ENCODE measurements at regions of chr7 and their contacts with region 1.

Region 1: GRCh38 chr7:28020302-28020940 is 160.2 kb downstream of the JAZF1 start:
- DNase-seq: peak; percentile 66 to 69
- H3K4me3 ChIP-seq: no peak overlapping the region
- H3K27ac ChIP-seq: no peak overlapping the region
- H3K4me1 ChIP-seq: peaks cover 8% of the 10 kb centered on the region; the same call in 1 of the 2 replicates
- H3K27me3 ChIP-seq: no peaks in the 10 kb centered on the region
- CTCF ChIP-seq: peak; percentile 96

Region 2: GRCh38 chr7:26853788-26854393 is 1166.5 kb before region 1 on chr7:
- CTCF ChIA-PET with region 1: no interaction called
- POLR2A ChIA-PET with region 1: no interaction called
- intact Hi-C with region 1: loop called (anchors 10 kb)
- DNase-seq: peak in 1 of 2 experiments; percentile 60
- H3K4me3 ChIP-seq: no peak overlapping the region
- H3K27ac ChIP-seq: no peak overlapping the region
- H3K4me1 ChIP-seq: peaks cover 24% of the 10 kb centered on the region
- H3K27me3 ChIP-seq: no peaks in the 10 kb centered on the region
- CTCF ChIP-seq: peak; percentile 90

Region 3: DNA sequence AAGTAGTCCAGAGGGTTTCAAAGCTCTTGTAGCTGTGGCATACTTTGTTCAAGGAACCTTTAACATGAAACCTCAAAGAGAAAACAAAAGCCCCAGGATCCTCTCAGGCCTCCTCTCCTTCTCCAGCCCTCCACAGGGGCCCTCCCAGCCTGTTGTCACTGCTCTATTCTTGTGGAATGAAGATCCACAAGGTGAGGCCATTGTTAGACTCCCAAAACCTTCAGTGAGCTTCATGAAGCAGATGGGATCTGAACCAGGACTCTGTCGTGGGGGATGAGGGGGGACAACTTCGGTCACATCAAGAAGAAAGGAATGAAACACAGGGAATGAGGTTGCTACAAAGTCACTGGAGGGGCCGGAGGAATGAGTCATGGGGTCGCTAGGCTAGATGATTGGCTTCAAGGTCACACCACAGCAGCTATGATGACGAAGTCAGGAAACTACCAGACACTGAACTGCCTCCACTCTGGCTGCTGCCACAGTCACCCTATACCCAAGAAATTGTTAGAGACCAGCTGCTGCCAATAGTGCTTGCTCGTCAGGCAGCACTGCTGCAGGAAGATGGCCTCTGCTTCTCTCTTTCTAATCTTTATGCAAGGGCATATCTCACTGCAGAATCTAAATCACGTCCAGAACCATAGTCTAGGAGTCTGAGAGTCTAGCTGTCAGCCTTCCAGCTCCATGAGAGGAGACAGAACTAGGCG is 566.6 kb before region 1 on chr7:
- CTCF ChIA-PET with region 1: interaction called, 11 read pairs
- POLR2A ChIA-PET with region 1: no interaction called
- intact Hi-C with region 1: no loop called
- DNase-seq: no peak
- H3K4me3 ChIP-seq: no peak overlapping the region
- H3K27ac ChIP-seq: no peak overlapping the region
- H3K4me1 ChIP-seq: no peaks in the 10 kb centered on the region
- H3K27me3 ChIP-seq: no peaks in the 10 kb centered on the region
- CTCF ChIP-seq: no peak

Region 4: DNA sequence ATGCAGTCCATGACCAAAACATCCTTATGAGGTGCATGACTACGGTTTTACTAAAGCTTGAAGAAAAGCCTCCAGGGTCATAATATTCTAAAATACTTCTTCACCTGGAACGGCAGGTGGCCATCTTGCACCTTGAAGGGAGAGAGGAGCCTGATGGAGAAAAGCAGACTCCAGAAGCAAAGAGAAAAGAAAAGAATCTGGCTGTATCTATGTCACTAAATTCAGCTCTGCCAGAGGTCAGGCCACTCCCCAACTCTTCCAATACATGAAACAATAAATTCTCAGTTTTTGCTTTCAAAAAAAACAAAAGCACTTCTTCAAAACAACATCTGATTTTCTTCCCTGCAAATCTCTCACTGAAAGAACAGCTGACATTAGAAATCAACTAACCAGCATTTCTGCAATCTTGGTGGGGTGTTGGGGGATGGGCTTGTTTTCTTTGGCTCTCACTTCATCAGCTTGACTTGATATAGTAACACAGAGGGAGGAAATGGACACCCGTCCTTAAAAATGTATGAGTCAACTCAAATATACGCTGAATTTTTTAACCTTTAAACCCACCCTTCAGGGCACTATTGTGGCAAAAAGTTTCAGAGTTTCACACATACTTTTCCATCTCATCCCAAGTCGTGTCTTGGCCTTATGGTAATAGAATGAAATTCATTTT is 379.4 kb before region 1 on chr7:
- CTCF ChIA-PET with region 1: no interaction called
- POLR2A ChIA-PET with region 1: no interaction called
- intact Hi-C with region 1: loop called (anchors 5 kb)
- DNase-seq: peak; percentile 87 to 96
- H3K4me3 ChIP-seq: peak overlapping the region; percentile 8; the same call in 1 of the 2 replicates
- H3K27ac ChIP-seq: peak overlapping the region; percentile 90
- H3K4me1 ChIP-seq: peaks cover 37% of the 10 kb centered on the region
- H3K27me3 ChIP-seq: no peaks in the 10 kb centered on the region
- CTCF ChIP-seq: peak; percentile 40; the same call in 1 of the 2 replicates

Region 5: GRCh38 chr7:27763983-27764516 is 256.4 kb before region 1 on chr7:
- CTCF ChIA-PET with region 1: no interaction called
- POLR2A ChIA-PET with region 1: no interaction called
- intact Hi-C with region 1: loop called (anchors 5 kb)
- DNase-seq: no peak
- H3K4me3 ChIP-seq: no peak overlapping the region
- H3K27ac ChIP-seq: no peak overlapping the region
- H3K4me1 ChIP-seq: peaks cover 17% of the 10 kb centered on the region; the same call in 1 of the 2 replicates
- H3K27me3 ChIP-seq: no peaks in the 10 kb centered on the region
- CTCF ChIP-seq: no peak

Region 6: GRCh38 chr7:28078036-28078901 is 57.8 kb after region 1 on chr7:
- CTCF ChIA-PET with region 1: interaction called, 3 read pairs
- POLR2A ChIA-PET with region 1: no interaction called
- intact Hi-C with region 1: loop called (anchors 1 kb)
- DNase-seq: peak in 1 of 2 experiments; percentile 47
- H3K4me3 ChIP-seq: no peak overlapping the region
- H3K27ac ChIP-seq: no peak overlapping the region
- H3K4me1 ChIP-seq: peaks cover 16% of the 10 kb centered on the region
- H3K27me3 ChIP-seq: no peaks in the 10 kb centered on the region
- CTCF ChIP-seq: peak; percentile 99

Measured in PC-9 (cell line).